Sigmoid colon (tissue), 7 donors: ENCODE measurements at regions of chr14 and their contacts with region 1.

Region 1: GRCh38 chr14:91875525-91876286 is 8.4 kb upstream of the TC2N start:
- DNase-seq: no peak
- H3K4me3 ChIP-seq: no peak overlapping the region
- H3K27ac ChIP-seq: no peak overlapping the region
- H3K4me1 ChIP-seq: no peaks in the 10 kb centered on the region
- H3K27me3 ChIP-seq: no peaks in the 10 kb centered on the region
- CTCF ChIP-seq: no peak
- EP300 ChIP-seq: no peak
- POLR2A ChIP-seq: no peak

Region 2: DNA sequence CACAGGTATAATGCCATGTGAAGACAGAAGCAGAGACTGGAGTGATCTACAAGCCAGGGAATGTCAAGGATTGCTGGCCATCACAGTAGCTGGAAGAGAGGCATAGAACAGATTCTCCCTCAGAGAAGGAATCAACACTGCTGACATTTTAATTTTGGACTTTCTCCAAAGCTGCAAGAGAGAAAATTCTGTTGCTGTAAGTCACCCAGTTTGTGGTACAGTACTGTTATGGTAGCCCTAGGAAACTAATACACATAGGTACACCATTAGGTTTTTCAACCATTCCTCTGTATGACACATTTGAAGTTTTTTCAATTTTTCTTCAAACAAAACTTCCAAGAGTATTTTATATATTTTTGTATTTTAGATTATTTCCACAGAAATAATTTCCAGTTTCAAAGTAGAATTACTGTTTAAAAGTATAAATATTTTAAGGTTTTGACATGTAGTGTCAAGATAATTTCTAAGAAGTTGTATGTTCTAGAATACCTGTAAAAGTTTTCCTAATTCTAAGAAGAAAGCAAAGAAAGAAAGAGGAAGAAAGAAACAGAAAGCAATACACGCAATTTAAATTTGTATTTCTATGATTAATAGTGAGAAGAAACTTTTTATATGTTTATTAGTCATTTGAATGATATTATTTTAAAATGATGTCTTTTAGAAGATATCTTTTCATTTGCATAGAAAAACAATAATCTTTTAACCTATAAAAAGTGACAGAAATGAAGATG is 78.9 kb before region 1 on chr14:
- intact Hi-C with region 1: no loop called
- DNase-seq: no peak
- H3K4me3 ChIP-seq: no peak overlapping the region
- H3K27ac ChIP-seq: no peak overlapping the region
- H3K4me1 ChIP-seq: peaks cover 0 to 15% (median 2%) of the 10 kb centered on the region in 4 donors
- H3K27me3 ChIP-seq: no peaks in the 10 kb centered on the region
- CTCF ChIP-seq: no peak
- EP300 ChIP-seq: no peak
- POLR2A ChIP-seq: no peak

Region 3: GRCh38 chr14:91836119-91836881 is 39.4 kb before region 1 on chr14:
- intact Hi-C with region 1: loop called (anchors 5 kb)
- DNase-seq: peak; percentile 91
- H3K4me3 ChIP-seq: peak overlapping the region; percentile 43 to 76 (median 66)
- H3K27ac ChIP-seq: peak overlapping the region; percentile 68 to 83 (median 80)
- H3K4me1 ChIP-seq: peaks cover 0 to 17% (median 12%) of the 10 kb centered on the region in 4 donors
- H3K27me3 ChIP-seq: peaks cover 0 to 24% (median 0%) of the 10 kb centered on the region in 3 donors
- CTCF ChIP-seq: no peak
- EP300 ChIP-seq: no peak
- POLR2A ChIP-seq: peak in 1 of 2 donors; percentile 19